ENCODE measurements at regions of chr6 and their contacts with region 1.

Region 1: GRCh38 chr6:70310063-70310694 is 7.3 kb upstream of the COL9A1 start:
- DNase-seq: peak in 2 of 35 experiments; percentile 3 to 45
- ATAC-seq: no peak
- H3K4me3 ChIP-seq: no peak overlapping the region
- H3K4me3 Mint-ChIP-seq: no peak overlapping the region
- H3K27ac ChIP-seq: no peak overlapping the region
- H3K27ac Mint-ChIP-seq: no peak overlapping the region
- H3K4me1 ChIP-seq: no peaks in the 10 kb centered on the region
- H3K4me1 Mint-ChIP-seq: no peaks in the 10 kb centered on the region
- H3K27me3 ChIP-seq: peaks cover 0 to 4% of the 10 kb centered on the region in 2 experiments
- H3K27me3 Mint-ChIP-seq: peaks cover 8 to 41% of the 10 kb centered on the region in 2 donors

Region 2: GRCh38 chr6:70574643-70575042 is 264.5 kb after region 1 on chr6:
- CTCF ChIA-PET with region 1: interaction called in 1 of 2 experiments, 11 read pairs
- POLR2A ChIA-PET with region 1: no interaction called
- DNase-seq: no peak
- ATAC-seq: no peak
- H3K4me3 ChIP-seq: no peak overlapping the region
- H3K4me3 Mint-ChIP-seq: no peak overlapping the region
- H3K27ac ChIP-seq: no peak overlapping the region
- H3K27ac Mint-ChIP-seq: no peak overlapping the region
- H3K4me1 ChIP-seq: no peaks in the 10 kb centered on the region
- H3K4me1 Mint-ChIP-seq: peaks cover 0 to 4% (median 3%) of the 10 kb centered on the region in 3 donors
- H3K27me3 ChIP-seq: no peaks in the 10 kb centered on the region
- H3K27me3 Mint-ChIP-seq: no peaks in the 10 kb centered on the region

Region 3: GRCh38 chr6:71015392-71015791 is 705.2 kb after region 1 on chr6:
- CTCF ChIA-PET with region 1: interaction called, 3 to 11 read pairs
- POLR2A ChIA-PET with region 1: no interaction called
- DNase-seq: no peak
- ATAC-seq: no peak
- H3K4me3 ChIP-seq: no peak overlapping the region
- H3K4me3 Mint-ChIP-seq: no peak overlapping the region
- H3K27ac ChIP-seq: no peak overlapping the region
- H3K27ac Mint-ChIP-seq: no peak overlapping the region
- H3K4me1 ChIP-seq: no peaks in the 10 kb centered on the region
- H3K4me1 Mint-ChIP-seq: no peaks in the 10 kb centered on the region
- H3K27me3 ChIP-seq: peaks cover 0 to under 1% of the 10 kb centered on the region in 2 experiments
- H3K27me3 Mint-ChIP-seq: peaks cover 16 to 23% of the 10 kb centered on the region in 2 donors

Measured in T-cell (primary cell).